ENCODE measurements at regions of chr12 and their contacts with region 1.

Region 1: DNA sequence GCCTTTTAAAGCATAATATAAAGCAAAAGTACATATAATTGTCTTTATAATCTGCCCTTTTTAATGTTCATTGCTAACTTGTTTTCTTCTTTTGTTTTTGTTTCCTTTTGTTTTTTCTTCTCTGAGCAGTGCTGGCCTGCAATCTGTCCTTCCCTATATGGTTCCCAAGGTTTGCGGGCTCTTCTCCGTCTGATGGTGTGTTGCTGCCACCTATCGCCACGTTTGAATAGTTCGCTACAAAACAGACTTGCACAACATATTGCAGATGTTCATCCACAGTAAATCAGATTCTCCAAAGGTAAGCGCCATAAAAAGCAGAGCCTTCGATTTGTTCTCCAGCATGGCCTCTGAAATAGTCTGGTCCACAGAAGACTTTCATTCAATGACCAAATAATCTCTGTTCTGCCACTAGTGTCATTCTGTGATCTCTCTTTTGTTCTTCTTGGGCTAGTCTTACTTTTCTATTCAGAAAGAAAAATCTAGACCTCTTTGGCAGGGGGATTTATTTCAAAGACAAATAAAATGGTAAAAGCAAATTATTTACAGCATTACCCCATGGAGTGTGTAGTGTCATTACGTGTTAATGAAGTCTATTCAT is 33.5 kb downstream of the C12orf50 start:
- DNase-seq: peak in 6 of 9 donors; percentile 9 to 30 (median 18)
- ATAC-seq: peak; percentile 66
- H3K4me3 ChIP-seq: no peak overlapping the region
- H3K4me3 Mint-ChIP-seq: no peak overlapping the region
- H3K27ac ChIP-seq: no peak overlapping the region
- H3K27ac Mint-ChIP-seq: no peak overlapping the region
- H3K4me1 ChIP-seq: no peaks in the 10 kb centered on the region
- H3K4me1 Mint-ChIP-seq: peaks cover 0 to 4% (median 0%) of the 10 kb centered on the region in 7 donors
- H3K27me3 ChIP-seq: no peaks in the 10 kb centered on the region
- H3K27me3 Mint-ChIP-seq: peaks cover 3 to 30% (median 9%) of the 10 kb centered on the region in 5 donors

Region 2: GRCh38 chr12:87848248-87848868 is 147.3 kb before region 1 on chr12:
- CTCF ChIA-PET with region 1: no interaction called
- POLR2A ChIA-PET with region 1: no interaction called
- intact Hi-C with region 1: loop called in 1 of 2 experiments (anchors 5 kb)
- DNase-seq: peak in 6 of 9 donors; percentile 3 to 39 (median 12)
- ATAC-seq: peak; percentile 54
- H3K4me3 ChIP-seq: no peak overlapping the region
- H3K4me3 Mint-ChIP-seq: no peak overlapping the region
- H3K27ac ChIP-seq: no peak overlapping the region
- H3K27ac Mint-ChIP-seq: no peak overlapping the region
- H3K4me1 ChIP-seq: no peaks in the 10 kb centered on the region
- H3K4me1 Mint-ChIP-seq: peaks cover 0 to 1% (median 0%) of the 10 kb centered on the region in 7 donors
- H3K27me3 ChIP-seq: no peaks in the 10 kb centered on the region
- H3K27me3 Mint-ChIP-seq: peaks cover 0 to 7% (median 3%) of the 10 kb centered on the region in 5 donors

Region 3: DNA sequence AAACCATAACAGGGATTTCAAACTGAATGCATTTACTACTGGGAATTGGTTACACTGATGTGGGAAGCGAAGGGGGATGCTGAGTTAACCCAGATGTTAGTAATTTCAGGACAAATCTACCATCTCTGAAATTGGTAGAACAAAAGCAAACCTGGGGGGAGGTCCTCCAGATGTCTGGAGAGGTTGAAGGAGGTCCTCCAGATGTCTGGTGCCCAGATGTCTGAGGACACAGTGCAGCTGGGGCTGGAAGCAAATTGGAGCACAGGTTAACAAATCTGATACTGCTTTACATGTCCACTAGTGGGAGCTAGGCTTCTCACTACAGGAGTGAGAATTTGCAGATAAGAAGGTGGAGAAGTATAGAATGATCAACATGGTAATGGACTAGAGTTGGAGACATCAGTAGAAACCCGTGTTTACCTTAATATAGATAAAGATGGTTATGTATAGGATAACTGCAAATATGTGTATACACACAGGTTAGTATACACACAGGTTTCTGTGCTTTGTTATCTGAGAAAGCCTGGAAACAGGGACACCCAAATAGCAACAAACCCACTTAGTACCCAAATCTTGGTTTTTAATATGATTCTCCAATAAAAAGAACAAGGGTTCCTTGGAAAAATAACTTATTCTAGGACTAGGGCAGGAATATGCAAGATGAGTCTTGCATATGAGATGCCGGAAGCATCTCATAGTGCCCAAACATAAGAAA is 128.9 kb before region 1 on chr12:
- CTCF ChIA-PET with region 1: no interaction called
- POLR2A ChIA-PET with region 1: no interaction called
- intact Hi-C with region 1: loop called in 1 of 2 experiments (anchors 1 kb)
- DNase-seq: no peak
- ATAC-seq: no peak
- H3K4me3 ChIP-seq: no peak overlapping the region
- H3K4me3 Mint-ChIP-seq: no peak overlapping the region
- H3K27ac ChIP-seq: no peak overlapping the region
- H3K27ac Mint-ChIP-seq: no peak overlapping the region
- H3K4me1 ChIP-seq: no peaks in the 10 kb centered on the region
- H3K4me1 Mint-ChIP-seq: no peaks in the 10 kb centered on the region
- H3K27me3 ChIP-seq: no peaks in the 10 kb centered on the region
- H3K27me3 Mint-ChIP-seq: peaks cover 0 to 9% (median 0%) of the 10 kb centered on the region in 5 donors

Measured in naive thymus-derived CD4-positive, alpha-beta T cell (primary cell).